Activated naive CD4-positive, alpha-beta T cell treated with anti-CD3 and anti-CD28 coated beads, Interleukin-2, amount 10 ng/mL, durations not matched to agents 7 days and 5 days (primary cell): ENCODE measurements at regions of chr7 and their contacts with region 1.

Region 1: DNA sequence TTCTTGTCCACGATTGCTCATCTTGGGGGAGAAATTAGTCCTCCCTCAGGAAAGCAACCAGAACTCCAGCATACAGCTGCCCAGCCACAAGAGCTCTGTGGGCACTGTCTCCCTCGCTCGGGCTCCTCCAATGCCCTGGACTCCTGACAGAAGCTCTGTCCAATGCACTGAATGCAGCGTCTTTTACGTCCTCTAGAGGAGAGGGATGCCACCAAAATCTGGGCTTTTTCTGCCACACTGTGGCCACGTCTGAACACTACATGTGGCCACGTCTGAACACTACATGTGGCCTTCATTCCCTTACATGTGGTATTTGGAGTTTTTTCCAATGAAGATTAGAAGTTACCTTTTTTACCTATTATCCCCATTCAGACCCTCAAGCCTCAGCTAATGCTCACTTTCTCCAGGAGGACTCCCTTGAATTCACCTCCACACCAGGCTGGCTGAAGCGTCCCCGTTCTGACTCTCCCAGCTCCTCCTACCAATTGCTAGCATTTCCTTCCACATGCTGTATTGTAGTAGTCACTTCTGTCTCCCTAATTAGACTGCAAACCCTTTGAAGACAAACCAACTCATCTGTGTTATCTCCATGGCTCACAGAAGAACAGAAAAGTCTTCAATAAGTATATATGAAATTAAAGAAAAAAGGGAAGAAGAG is 134.3 kb upstream of the PDE1C start:
- DNase-seq: no peak
- H3K4me3 Mint-ChIP-seq: no peak overlapping the region
- H3K27ac Mint-ChIP-seq: no peak overlapping the region
- H3K4me1 Mint-ChIP-seq: no peaks in the 10 kb centered on the region
- H3K27me3 Mint-ChIP-seq: no peaks in the 10 kb centered on the region

Region 2: DNA sequence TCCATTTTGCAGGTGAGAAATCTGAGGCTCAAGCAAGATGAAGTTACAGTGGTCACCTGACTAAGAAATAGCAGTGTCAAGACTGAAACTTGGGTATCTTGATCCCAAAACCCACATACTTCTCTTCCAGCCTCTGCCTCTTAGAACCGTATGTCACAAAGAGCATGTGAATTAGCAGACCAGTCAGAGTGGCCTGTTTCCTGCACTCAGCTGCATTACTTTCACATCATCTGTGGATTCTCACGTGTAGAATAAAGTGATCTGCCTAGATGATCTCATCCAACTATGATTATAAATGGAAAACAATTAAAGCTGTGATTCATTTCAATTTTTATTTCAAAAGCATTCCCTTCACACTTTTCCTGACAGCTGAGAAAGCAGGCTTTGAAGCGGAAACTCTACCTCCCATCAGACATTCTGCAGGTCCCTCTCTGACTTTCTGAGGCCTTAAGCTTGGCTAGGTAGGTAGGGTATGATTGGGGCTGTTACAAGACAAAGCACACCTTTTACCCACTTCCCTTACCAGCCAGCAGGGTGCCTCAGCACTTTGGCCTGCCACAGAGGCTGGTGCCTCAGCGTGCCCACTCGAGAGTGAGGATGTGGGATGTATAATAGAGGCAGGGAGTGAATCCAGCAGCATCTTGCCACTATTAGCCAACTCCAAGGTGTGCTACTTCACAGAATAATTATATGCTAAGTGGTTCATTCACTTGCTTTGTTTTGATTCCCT is 64.1 kb before region 1 on chr7:
- CTCF ChIA-PET with region 1: no interaction called
- DNase-seq: no peak
- H3K4me3 Mint-ChIP-seq: no peak overlapping the region
- H3K27ac Mint-ChIP-seq: no peak overlapping the region
- H3K4me1 Mint-ChIP-seq: no peaks in the 10 kb centered on the region
- H3K27me3 Mint-ChIP-seq: no peaks in the 10 kb centered on the region

Region 3: DNA sequence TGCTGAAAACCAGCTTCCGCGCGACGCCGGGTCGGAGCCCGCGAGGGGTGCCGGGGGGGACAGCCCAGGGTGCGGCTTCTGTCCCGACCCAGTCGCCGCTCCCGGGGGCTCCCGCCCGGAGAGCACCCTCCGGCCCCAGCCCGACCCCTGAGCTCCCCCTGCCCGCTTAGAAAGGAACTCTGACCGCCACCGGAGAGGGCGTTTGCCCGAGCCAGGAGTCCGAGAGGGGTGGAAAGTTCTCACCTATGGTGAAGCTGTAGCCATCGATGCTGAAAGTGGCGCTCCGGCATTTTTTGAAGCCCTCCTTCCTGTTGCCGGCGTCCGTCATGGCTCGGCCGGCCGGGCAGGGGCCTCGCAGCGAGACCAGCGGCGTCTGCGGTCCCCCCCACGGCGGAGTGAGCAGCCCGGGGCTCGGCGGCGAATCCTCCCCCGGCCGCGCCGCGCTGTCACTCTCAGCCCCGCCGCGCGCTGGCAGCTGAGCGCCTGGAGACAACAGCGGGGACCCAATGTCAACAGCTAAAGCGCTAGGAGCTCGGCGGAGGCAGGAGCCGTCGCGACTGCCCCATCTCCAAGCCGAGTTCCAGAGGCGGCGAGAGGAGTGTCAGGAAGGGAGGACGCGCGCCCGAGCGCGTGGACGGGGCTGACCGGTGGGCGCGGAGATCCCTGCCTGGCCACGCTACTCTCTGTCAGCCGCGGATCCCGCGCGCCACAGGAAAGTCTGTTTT is 94.1 kb after region 1 on chr7:
- CTCF ChIA-PET with region 1: no interaction called
- DNase-seq: no peak
- H3K4me3 Mint-ChIP-seq: no peak overlapping the region
- H3K27ac Mint-ChIP-seq: no peak overlapping the region
- H3K4me1 Mint-ChIP-seq: peaks cover 4% of the 10 kb centered on the region
- H3K27me3 Mint-ChIP-seq: peaks cover 48% of the 10 kb centered on the region

Region 4: GRCh38 chr7:32347244-32347828 is 142.8 kb after region 1 on chr7:
- CTCF ChIA-PET with region 1: interaction called, 24 read pairs
- DNase-seq: peak; percentile 52
- H3K4me3 Mint-ChIP-seq: no peak overlapping the region
- H3K27ac Mint-ChIP-seq: no peak overlapping the region
- H3K4me1 Mint-ChIP-seq: no peaks in the 10 kb centered on the region
- H3K27me3 Mint-ChIP-seq: no peaks in the 10 kb centered on the region